H1 (cell line): ENCODE measurements at regions of chr14 and their contacts with region 1.

Region 1: DNA sequence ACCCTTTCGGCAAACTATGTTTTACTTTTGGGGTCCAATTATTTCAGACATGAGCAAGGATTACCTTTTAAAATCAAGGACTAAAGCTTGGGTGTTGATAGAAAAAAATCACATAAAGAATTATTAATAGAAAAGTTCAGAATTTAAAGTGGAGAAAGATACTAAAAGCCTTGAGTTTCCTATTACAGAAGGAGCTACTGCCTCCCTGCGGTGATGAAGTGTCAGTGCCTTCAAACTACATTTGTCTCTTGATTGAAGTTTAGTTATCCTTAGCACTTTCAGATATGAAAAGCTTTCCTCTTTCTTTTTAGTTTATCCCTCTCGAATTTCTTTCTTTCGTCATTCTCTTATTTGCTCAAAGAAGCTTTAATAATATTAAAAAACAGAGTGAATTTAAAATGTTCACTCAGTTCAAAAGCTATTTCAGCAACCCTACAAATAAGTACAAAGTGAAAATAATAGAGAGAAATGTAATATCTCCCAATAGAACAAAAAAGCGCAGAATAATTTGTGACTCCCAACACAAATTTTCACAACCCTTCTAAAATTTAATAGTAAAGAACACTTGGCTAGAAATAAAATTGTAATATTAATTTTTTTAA is 87.6 kb downstream of the SEC23A start:
- DNase-seq: no peak
- H3K4me3 ChIP-seq: no peak overlapping the region
- H3K27ac ChIP-seq: no peak overlapping the region
- H3K4me1 ChIP-seq: no peaks in the 10 kb centered on the region
- H3K27me3 ChIP-seq: no peaks in the 10 kb centered on the region
- CTCF ChIP-seq: peak in 2 of 3 experiments; percentile 52 to 72; a peak in 2 of 4 replicates
- EP300 ChIP-seq: no peak
- POLR2A ChIP-seq: no peak
- RAD21 ChIP-seq: peak; percentile 80 to 85

Region 2: GRCh38 chr14:38716926-38717325 is 298.5 kb before region 1 on chr14:
- CTCF ChIA-PET with region 1: interaction called, 49 read pairs
- POLR2A ChIA-PET with region 1: no interaction called
- DNase-seq: no peak
- H3K4me3 ChIP-seq: no peak overlapping the region
- H3K27ac ChIP-seq: no peak overlapping the region
- H3K4me1 ChIP-seq: no peaks in the 10 kb centered on the region
- H3K27me3 ChIP-seq: no peaks in the 10 kb centered on the region
- CTCF ChIP-seq: no peak
- EP300 ChIP-seq: no peak
- POLR2A ChIP-seq: no peak
- RAD21 ChIP-seq: no peak

Region 3: GRCh38 chr14:38867561-38868150 is 147.8 kb before region 1 on chr14:
- CTCF ChIA-PET with region 1: interaction called, 18 read pairs
- POLR2A ChIA-PET with region 1: no interaction called
- DNase-seq: peak; percentile 23 to 81
- H3K4me3 ChIP-seq: no peak overlapping the region
- H3K27ac ChIP-seq: no peak overlapping the region
- H3K4me1 ChIP-seq: peaks cover 0 to 3% (median 1%) of the 10 kb centered on the region in 4 experiments; a peak in 3 of 7 replicates
- H3K27me3 ChIP-seq: peaks cover 0 to 1% (median 0%) of the 10 kb centered on the region in 4 experiments; a peak in 1 of 7 replicates
- CTCF ChIP-seq: peak; percentile 77 to 86 (median 85)
- EP300 ChIP-seq: no peak
- POLR2A ChIP-seq: no peak
- RAD21 ChIP-seq: peak; percentile 95 to 96

Region 4: DNA sequence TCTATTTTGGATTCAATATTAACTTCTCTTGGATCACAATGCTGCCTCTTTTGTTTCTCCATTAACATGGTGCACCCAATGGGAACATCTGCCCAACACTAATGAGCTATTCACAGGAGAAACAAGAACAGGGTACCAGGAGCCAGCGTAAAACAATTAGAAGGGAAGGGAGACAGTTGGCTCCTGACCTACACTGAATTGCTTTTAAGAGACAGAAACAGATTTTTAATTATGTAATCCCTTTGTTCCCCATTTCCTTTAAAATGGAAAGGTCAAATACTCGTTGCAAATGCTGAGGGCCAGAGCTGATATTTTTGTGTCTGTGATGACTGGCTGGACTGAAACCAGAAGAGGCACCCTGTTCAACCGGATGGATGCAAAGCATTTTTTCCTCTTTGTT is 20.7 kb before region 1 on chr14:
- CTCF ChIA-PET with region 1: interaction called, 10 read pairs
- POLR2A ChIA-PET with region 1: no interaction called
- DNase-seq: no peak
- H3K4me3 ChIP-seq: no peak overlapping the region
- H3K27ac ChIP-seq: no peak overlapping the region
- H3K4me1 ChIP-seq: no peaks in the 10 kb centered on the region
- H3K27me3 ChIP-seq: no peaks in the 10 kb centered on the region
- CTCF ChIP-seq: no peak
- EP300 ChIP-seq: no peak
- POLR2A ChIP-seq: no peak
- RAD21 ChIP-seq: no peak

Region 5: DNA sequence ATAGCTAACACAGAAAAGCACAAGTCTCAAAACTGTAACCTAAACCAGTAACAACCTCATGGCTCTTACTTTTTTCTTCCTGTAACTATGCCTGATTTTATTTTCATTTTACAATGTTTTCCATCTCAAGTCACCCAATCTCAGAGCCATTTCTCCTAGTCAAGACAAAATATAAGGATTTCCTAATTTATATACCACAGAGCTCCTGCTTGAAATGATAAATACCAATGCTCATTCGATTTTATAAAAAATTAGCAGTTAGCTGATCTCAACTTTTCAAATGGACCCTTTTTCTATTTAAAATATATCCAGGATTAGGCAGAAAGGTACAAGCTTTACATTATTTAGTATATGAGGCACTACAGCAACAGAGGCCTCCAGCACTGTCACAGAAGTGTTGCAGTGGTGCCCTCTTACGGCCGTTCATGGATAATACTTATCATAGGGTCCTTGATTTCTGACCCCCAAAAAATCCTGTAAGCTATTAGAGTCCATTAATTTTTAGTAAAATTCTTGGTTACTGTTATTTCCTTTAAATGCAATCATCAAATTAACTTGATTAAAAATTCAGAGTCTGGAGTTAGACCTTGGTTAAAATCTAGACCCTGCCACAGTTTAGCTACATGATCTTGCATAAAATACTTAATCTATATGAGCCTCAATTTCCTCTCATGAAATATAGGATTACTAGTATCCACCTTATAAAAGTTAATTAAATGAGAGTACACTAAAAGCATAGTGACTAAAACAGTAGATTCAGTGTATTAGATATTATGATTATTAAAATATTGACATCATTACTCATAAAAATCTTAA is 19.2 kb after region 1 on chr14:
- CTCF ChIA-PET with region 1: interaction called, 14 read pairs
- POLR2A ChIA-PET with region 1: interaction called, 3 read pairs
- DNase-seq: no peak
- H3K4me3 ChIP-seq: no peak overlapping the region
- H3K27ac ChIP-seq: no peak overlapping the region
- H3K4me1 ChIP-seq: no peaks in the 10 kb centered on the region
- H3K27me3 ChIP-seq: peaks cover 0 to 1% (median 0%) of the 10 kb centered on the region in 4 experiments; a peak in 1 of 7 replicates
- CTCF ChIP-seq: peak; percentile 21 to 46 (median 42)
- EP300 ChIP-seq: no peak
- POLR2A ChIP-seq: no peak
- RAD21 ChIP-seq: peak; percentile 57 to 65

Region 6: GRCh38 chr14:39069923-39070322 is 54.5 kb after region 1 on chr14:
- CTCF ChIA-PET with region 1: no interaction called
- POLR2A ChIA-PET with region 1: no interaction called
- DNase-seq: no peak
- H3K4me3 ChIP-seq: no peak overlapping the region
- H3K27ac ChIP-seq: no peak overlapping the region
- H3K4me1 ChIP-seq: no peaks in the 10 kb centered on the region
- H3K27me3 ChIP-seq: no peaks in the 10 kb centered on the region
- CTCF ChIP-seq: no peak
- EP300 ChIP-seq: no peak
- POLR2A ChIP-seq: no peak
- RAD21 ChIP-seq: no peak

Region 7: DNA sequence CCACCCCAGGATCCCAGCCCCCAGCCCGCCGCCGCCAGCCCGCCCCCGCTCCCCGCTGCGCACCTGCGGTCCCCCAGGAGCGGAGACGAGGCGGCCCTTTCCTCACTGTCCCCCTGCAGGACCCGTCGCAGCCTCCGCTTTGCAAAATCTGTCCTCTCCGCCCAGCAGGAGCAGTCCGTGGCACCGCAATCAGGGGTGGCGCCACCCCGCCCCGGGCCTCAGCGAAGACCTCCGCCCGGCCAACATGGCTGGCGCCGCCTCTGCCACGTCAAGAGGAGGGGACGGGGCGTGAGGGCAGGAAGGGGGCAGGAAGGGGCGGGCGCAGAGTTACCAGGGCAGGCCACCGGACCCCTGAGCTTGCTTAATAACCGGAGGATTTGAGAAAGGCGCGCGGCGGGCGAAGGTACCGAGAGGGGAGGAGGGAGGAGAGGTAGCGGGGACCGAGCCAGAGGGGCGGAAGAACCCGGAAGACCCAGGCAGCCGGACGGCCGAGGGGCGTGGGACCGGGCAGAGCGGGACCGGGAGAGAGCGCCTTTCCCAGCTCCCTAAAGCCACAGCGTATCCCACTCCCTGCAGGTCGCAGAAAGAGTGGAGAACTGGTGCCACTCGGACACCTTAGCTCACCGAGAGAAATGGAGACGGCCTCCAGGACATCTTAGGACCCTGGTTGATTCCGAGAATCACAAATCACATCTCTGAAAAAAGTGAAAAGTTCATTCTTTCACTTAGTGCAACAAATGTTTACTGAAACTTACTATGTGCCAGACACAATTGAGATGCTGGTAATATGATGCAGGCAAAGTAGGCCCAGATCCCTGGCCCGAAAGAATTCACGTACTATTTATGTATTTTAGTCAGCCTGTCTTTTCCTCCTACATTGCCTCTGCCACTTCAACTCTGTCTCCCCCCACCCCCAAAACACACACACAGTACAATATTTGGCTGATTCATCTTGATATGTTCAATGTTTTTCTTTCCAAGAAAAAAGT is 87.8 kb after region 1 on chr14 and contains the start of gene SEC23A:
- CTCF ChIA-PET with region 1: no interaction called
- POLR2A ChIA-PET with region 1: no interaction called
- DNase-seq: peak; percentile 85 to 92
- H3K4me3 ChIP-seq: peak within 1 kb of the TSS; percentile 81 to 85 (median 82)
- H3K27ac ChIP-seq: peak within 1 kb of the TSS; percentile 79
- H3K4me1 ChIP-seq: peaks cover 0 to 3% (median 1%) of the 10 kb centered on the region in 4 experiments; a peak in 3 of 7 replicates
- H3K27me3 ChIP-seq: no peaks in the 10 kb centered on the region
- CTCF ChIP-seq: no peak
- EP300 ChIP-seq: no peak
- POLR2A ChIP-seq: peak; percentile 67 to 81
- RAD21 ChIP-seq: no peak
- total RNA-seq, gene SEC23A: 58.2 and 60.9 TPM in 2 replicates